Activated naive CD4-positive, alpha-beta T cell treated with anti-CD3 and anti-CD28 coated beads for 36 hours (primary cell): ENCODE measurements at regions of chr6 and their contacts with region 1.

Region 1: GRCh38 chr6:50128420-50129005 is 78.8 kb upstream of the DEFB112 start:
- DNase-seq: no peak
- H3K4me3 Mint-ChIP-seq: no peak overlapping the region
- H3K27ac Mint-ChIP-seq: no peak overlapping the region
- H3K4me1 Mint-ChIP-seq: no peaks in the 10 kb centered on the region
- H3K27me3 Mint-ChIP-seq: no peaks in the 10 kb centered on the region

Region 2: GRCh38 chr6:50791900-50792508 is 663.5 kb after region 1 on chr6:
- CTCF ChIA-PET with region 1: no interaction called
- intact Hi-C with region 1: loop called (anchors 1 kb)
- DNase-seq: no peak
- H3K4me3 Mint-ChIP-seq: no peak overlapping the region
- H3K27ac Mint-ChIP-seq: no peak overlapping the region
- H3K4me1 Mint-ChIP-seq: no peaks in the 10 kb centered on the region
- H3K27me3 Mint-ChIP-seq: no peaks in the 10 kb centered on the region